WTC11 (cell line): ENCODE measurements at regions of chr17 and their contacts with region 1.

Region 1: GRCh38 chr17:60720763-60721531 is 43.3 kb downstream of the BCAS3 start:
- DNase-seq: peak; percentile 16
- ATAC-seq: no peak
- H3K4me3 Mint-ChIP-seq: no peak overlapping the region
- H3K27ac Mint-ChIP-seq: no peak overlapping the region
- H3K4me1 Mint-ChIP-seq: no peaks in the 10 kb centered on the region
- H3K27me3 Mint-ChIP-seq: no peaks in the 10 kb centered on the region; the same call in none of the 2 replicates
- CTCF ChIP-seq: peak; percentile 84

Region 2: DNA sequence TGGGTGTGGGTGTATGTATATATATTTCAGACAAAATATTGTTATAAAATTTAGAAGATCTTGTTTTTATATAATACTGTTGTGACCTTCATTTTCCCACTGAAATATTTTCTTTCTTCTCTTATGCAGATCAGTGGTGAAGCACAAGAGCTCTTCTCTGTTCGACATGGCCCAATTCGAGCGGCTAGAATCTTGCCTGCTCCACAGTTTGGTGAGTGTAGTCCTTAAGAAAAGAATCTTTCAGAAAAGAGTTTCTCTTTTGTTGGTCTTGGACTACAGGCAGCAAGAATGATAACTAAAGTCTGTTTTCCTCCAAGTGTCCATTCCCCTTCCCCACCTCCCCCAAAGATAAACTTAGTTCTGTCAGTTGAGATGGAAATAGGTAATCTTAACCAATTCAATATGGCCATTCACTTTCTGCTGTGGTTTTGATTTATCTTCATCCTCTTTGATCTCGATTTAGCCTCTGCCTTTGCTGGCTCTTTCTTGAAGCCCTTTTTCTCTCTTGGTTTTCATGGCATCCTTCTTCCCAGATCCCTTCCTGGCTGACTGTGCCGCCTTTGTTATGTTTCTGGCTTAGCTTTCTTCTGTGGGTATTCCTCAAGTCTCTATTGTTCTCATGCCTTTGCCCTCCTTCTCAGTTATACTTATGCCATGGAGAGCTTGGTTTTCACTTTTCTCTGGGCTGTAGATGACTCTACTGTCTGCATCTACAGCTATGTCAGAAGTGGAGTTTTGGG is 26.3 kb after region 1 on chr17:
- CTCF ChIA-PET with region 1: interaction called, 11 read pairs
- POLR2A ChIA-PET with region 1: no interaction called
- DNase-seq: no peak
- ATAC-seq: peak; percentile 92
- H3K4me3 Mint-ChIP-seq: peak overlapping the region; percentile 29
- H3K27ac Mint-ChIP-seq: peak overlapping the region; percentile 90
- H3K4me1 Mint-ChIP-seq: peaks cover 39% of the 10 kb centered on the region
- H3K27me3 Mint-ChIP-seq: no peaks in the 10 kb centered on the region
- CTCF ChIP-seq: no peak

Region 3: GRCh38 chr17:60971515-60972369 is 250.8 kb after region 1 on chr17:
- CTCF ChIA-PET with region 1: interaction called, 18 read pairs
- POLR2A ChIA-PET with region 1: no interaction called
- DNase-seq: peak; percentile 49
- ATAC-seq: peak; percentile 89
- H3K4me3 Mint-ChIP-seq: no peak overlapping the region
- H3K27ac Mint-ChIP-seq: no peak overlapping the region
- H3K4me1 Mint-ChIP-seq: peaks cover 6% of the 10 kb centered on the region
- H3K27me3 Mint-ChIP-seq: no peaks in the 10 kb centered on the region
- CTCF ChIP-seq: peak; percentile 54

Region 4: GRCh38 chr17:61000911-61001310 is 280.0 kb after region 1 on chr17:
- CTCF ChIA-PET with region 1: interaction called, 11 read pairs
- POLR2A ChIA-PET with region 1: no interaction called
- DNase-seq: no peak
- ATAC-seq: peak; percentile 39; the same call in 1 of the 2 replicates
- H3K4me3 Mint-ChIP-seq: no peak overlapping the region
- H3K27ac Mint-ChIP-seq: no peak overlapping the region
- H3K4me1 Mint-ChIP-seq: peaks cover 18% of the 10 kb centered on the region
- H3K27me3 Mint-ChIP-seq: no peaks in the 10 kb centered on the region
- CTCF ChIP-seq: no peak